Common myeloid progenitor, CD34-positive (primary cell): ENCODE measurements at regions of chr1 and their contacts with region 1.

Region 1: GRCh38 chr1:179369751-179370341 is 4.1 kb downstream of the AXDND1 start:
- DNase-seq: peak; percentile 66 to 82 (median 77)
- H3K4me3 ChIP-seq: no peak overlapping the region
- H3K27ac ChIP-seq: no peak overlapping the region
- H3K4me1 ChIP-seq: peaks cover 2 to 15% (median 9%) of the 10 kb centered on the region in 4 experiments
- H3K27me3 ChIP-seq: no peaks in the 10 kb centered on the region

Region 2: GRCh38 chr1:179077396-179077795 is 292.4 kb before region 1 on chr1:
- CTCF ChIA-PET with region 1: interaction called, 26 read pairs
- POLR2A ChIA-PET with region 1: no interaction called
- DNase-seq: no peak
- H3K4me3 ChIP-seq: no peak overlapping the region
- H3K27ac ChIP-seq: no peak overlapping the region
- H3K4me1 ChIP-seq: peaks cover 0 to 12% (median 11%) of the 10 kb centered on the region in 4 experiments
- H3K27me3 ChIP-seq: no peaks in the 10 kb centered on the region

Region 3: DNA sequence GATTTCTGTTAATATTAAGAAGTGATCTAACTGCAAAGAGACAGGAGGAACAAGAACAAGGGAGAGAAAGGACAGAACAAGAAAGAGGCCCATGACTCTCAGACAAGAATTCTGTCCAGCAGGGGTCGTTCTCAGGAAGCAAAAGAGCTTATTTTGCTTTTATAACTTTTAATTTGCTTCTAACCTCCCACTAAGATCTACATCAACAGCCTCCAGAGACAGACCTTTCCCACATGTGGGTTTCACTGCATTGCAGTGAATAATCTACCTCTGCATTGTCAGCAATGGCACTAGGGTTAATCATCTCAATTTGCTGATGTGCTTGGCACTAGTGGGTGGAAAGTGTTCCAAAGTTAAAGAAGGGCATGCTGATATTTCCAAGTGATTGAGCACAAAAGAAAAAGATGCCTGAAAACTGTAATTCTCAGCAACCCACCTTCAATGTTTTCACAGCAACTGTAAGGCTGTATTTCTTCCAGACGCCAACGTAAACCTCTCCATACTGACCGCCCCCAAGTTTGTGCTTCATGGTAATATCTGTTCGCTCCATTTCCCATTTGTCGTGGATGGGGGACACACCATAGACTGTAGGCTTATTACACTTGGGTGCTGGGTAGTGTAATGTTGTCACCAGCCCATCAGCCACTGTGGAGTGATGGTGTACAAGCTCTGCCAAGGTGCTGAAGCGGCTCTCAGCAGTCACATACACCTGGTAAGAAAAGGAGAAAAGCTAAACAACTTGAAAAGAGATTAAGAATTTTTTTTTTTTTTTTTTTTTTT is 248.5 kb before region 1 on chr1:
- CTCF ChIA-PET with region 1: interaction called, 16 read pairs
- POLR2A ChIA-PET with region 1: no interaction called
- DNase-seq: peak; percentile 52 to 75 (median 66)
- H3K4me3 ChIP-seq: no peak overlapping the region
- H3K27ac ChIP-seq: no peak overlapping the region
- H3K4me1 ChIP-seq: no peaks in the 10 kb centered on the region
- H3K27me3 ChIP-seq: no peaks in the 10 kb centered on the region

Region 4: GRCh38 chr1:179293340-179294327 is 76.2 kb before region 1 on chr1 and contains the start of gene SOAT1:
- CTCF ChIA-PET with region 1: interaction called, 18 read pairs
- POLR2A ChIA-PET with region 1: no interaction called
- DNase-seq: peak; percentile 87 to 94 (median 91)
- H3K4me3 ChIP-seq: peak within 1 kb of the TSS; percentile 75 to 90 (median 87)
- H3K27ac ChIP-seq: peak within 1 kb of the TSS in 1 of 2 experiments; percentile 74
- H3K4me1 ChIP-seq: peaks cover 16 to 24% (median 20%) of the 10 kb centered on the region in 4 experiments
- H3K27me3 ChIP-seq: no peaks in the 10 kb centered on the region